AG04450 (cell line): ENCODE measurements at regions of chr16 and their contacts with region 1.

Region 1: GRCh38 chr16:56866943-56867830 is 2.2 kb downstream of the SLC12A3 start:
- DNase-seq: no peak
- H3K4me3 ChIP-seq: no peak overlapping the region
- H3K27ac ChIP-seq: no peak overlapping the region
- H3K27me3 ChIP-seq: no peaks in the 10 kb centered on the region
- CTCF ChIP-seq: peak; percentile 79

Region 2: DNA sequence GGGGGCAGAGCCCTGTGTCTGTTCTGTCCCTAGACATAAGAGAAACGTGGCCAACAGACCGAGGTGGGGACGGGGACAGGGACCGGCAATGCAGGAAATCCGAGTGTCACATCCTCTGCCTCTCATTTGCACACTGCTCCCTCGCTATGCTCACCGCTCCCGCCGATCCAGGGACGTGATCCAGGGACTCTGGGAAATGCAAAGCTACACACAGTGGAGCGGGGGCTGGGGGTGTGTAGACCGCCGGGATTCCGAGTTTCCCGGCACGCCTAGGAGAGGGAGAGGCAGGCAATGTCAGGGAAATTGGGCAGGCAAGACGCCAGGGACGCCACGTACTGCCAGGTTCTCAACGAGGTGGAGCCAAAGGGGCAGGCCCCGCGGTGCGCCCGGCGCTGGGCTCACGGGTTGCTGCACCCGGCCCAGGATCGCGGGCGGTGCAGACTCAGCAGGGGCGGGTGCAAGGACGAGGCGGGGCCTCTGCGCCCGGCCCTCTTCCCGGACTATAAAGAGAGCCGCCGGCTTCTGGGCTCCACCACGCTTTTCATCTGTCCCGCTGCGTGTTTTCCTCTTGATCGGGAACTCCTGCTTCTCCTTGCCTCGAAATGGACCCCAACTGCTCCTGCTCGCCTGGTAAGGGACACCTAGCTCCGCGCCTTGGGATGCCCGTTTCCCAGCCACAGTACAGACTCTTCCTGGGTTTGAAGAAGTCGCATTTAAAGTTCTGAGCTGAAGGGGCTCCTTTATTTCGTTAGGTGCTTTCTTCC is 185.1 kb before region 1 on chr16 and contains the start of gene MT1X:
- CTCF ChIA-PET with region 1: no interaction called
- POLR2A ChIA-PET with region 1: no interaction called
- DNase-seq: peak; percentile 59
- H3K4me3 ChIP-seq: peak within 1 kb of the TSS; percentile 77
- H3K27ac ChIP-seq: no peak within 1 kb of the TSS
- H3K27me3 ChIP-seq: peaks cover 2% of the 10 kb centered on the region
- CTCF ChIP-seq: no peak
- polyA plus RNA-seq, gene MT1X: 19.5 and 30.1 TPM in 2 replicates

Region 3: DNA sequence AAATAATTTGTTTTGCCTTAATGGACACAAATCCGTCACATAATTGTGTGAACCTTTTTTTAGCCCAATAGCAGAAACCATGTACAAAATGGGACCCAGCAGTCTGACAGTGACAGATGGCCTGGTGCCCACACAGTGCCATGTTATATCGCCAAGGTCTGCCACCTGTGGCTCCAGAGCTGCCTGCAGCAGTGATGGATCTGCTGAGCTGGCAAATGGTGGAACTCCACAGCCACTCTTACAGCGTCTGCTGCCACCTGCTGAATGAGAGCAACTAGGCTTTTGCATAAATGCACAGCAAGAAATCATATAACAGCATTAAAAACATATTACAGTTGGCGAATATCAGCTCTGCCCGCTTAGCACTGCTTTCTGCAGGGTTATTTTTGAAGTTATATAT is 77.8 kb before region 1 on chr16:
- CTCF ChIA-PET with region 1: interaction called, 29 read pairs
- POLR2A ChIA-PET with region 1: no interaction called
- DNase-seq: no peak
- H3K4me3 ChIP-seq: no peak overlapping the region
- H3K27ac ChIP-seq: no peak overlapping the region
- H3K27me3 ChIP-seq: no peaks in the 10 kb centered on the region
- CTCF ChIP-seq: peak; percentile 56

Region 4: GRCh38 chr16:56856876-56857447 is 10.2 kb before region 1 on chr16:
- CTCF ChIA-PET with region 1: interaction called, 17 read pairs
- POLR2A ChIA-PET with region 1: interaction called, 3 read pairs
- DNase-seq: no peak
- H3K4me3 ChIP-seq: no peak overlapping the region
- H3K27ac ChIP-seq: no peak overlapping the region
- H3K27me3 ChIP-seq: no peaks in the 10 kb centered on the region
- CTCF ChIP-seq: no peak

Region 5: DNA sequence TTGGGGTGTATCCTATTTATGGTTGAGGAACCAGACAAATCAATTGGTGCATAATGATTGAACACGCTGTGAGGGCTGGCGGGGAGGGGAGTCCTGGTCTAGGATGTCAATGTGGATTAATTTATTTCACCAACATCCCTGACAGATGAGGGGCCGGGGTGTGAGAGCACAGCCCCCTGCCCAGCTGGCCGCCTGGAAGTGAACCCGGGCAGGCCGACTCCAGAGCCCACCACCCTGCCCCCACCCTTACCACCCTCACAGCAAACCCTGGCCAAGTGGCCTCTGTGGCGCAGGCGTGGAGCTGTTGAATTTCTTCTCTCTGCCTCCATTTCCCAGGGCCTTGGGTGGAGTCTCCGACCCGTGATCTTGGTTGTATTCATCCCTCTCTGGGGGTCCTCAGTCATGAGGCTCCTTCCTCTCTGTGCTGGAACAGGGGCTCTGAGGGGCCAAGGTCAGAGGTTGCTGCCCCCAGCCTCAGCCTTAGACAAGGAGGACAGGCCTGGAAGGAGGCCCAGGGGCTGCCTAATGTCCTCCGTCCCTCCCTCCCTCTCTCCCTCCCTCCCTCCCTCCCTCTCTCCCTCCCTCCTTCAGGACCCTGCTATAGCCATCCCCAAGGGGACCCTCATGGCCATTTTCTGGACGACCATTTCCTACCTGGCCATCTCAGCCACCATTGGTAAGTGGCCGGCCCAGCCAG is 10.4 kb after region 1 on chr16:
- CTCF ChIA-PET with region 1: interaction called, 10 read pairs
- POLR2A ChIA-PET with region 1: no interaction called
- DNase-seq: no peak
- H3K4me3 ChIP-seq: no peak overlapping the region
- H3K27ac ChIP-seq: no peak overlapping the region
- H3K27me3 ChIP-seq: peaks cover 2% of the 10 kb centered on the region
- CTCF ChIP-seq: no peak

Region 6: GRCh38 chr16:56950881-56951771 is 83.9 kb after region 1 on chr16:
- CTCF ChIA-PET with region 1: interaction called, 31 read pairs
- POLR2A ChIA-PET with region 1: interaction called, 4 read pairs
- DNase-seq: no peak
- H3K4me3 ChIP-seq: no peak overlapping the region
- H3K27ac ChIP-seq: no peak overlapping the region
- H3K27me3 ChIP-seq: no peaks in the 10 kb centered on the region
- CTCF ChIP-seq: peak; percentile 66

Region 7: GRCh38 chr16:56956756-56957155 is 89.6 kb after region 1 on chr16:
- CTCF ChIA-PET with region 1: interaction called, 31 read pairs
- POLR2A ChIA-PET with region 1: no interaction called
- DNase-seq: no peak
- H3K4me3 ChIP-seq: no peak overlapping the region
- H3K27ac ChIP-seq: no peak overlapping the region
- H3K27me3 ChIP-seq: no peaks in the 10 kb centered on the region
- CTCF ChIP-seq: no peak; the same call in 1 of the 2 replicates

Region 8: DNA sequence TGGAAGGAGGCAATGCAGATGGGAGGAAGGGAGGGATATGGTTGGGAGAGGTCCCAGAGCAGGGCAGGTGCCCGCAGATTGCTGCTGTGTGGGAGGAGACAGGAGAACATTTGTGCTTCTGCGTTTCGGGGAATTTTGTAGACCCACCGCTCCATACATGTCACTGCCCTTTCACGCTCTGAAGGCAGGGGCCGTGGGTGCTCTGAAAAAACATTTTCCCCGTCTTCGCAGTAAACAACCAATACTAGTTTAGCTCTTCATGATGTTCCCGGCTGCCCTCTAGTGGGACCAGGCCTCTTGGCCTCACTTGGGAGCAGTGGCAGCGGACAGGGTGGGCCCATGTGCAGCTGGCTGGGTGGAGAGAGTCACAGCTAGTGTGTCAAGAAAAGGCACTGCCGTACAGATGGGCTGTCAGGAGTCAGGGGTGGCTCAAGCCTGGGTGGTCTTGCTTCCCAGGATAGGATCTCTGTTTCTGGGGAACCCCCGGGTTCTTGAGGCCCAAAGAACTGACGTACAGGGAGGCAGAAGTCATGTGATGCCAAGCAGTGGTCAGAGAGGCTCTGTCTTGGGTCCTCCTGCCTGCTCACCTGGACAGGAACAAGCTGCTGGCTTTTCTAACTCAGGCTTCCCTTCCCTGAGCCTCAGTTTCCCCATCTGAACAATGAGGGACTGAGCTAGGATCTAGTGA is 178.7 kb after region 1 on chr16:
- CTCF ChIA-PET with region 1: interaction called, 33 read pairs
- POLR2A ChIA-PET with region 1: no interaction called
- DNase-seq: peak; percentile 26
- H3K4me3 ChIP-seq: no peak overlapping the region
- H3K27ac ChIP-seq: no peak overlapping the region
- H3K27me3 ChIP-seq: no peaks in the 10 kb centered on the region
- CTCF ChIP-seq: peak; percentile 87